Vagina (tissue), 2 donors: ENCODE measurements at regions of chr14 and their contacts with region 1.

Region 1: DNA sequence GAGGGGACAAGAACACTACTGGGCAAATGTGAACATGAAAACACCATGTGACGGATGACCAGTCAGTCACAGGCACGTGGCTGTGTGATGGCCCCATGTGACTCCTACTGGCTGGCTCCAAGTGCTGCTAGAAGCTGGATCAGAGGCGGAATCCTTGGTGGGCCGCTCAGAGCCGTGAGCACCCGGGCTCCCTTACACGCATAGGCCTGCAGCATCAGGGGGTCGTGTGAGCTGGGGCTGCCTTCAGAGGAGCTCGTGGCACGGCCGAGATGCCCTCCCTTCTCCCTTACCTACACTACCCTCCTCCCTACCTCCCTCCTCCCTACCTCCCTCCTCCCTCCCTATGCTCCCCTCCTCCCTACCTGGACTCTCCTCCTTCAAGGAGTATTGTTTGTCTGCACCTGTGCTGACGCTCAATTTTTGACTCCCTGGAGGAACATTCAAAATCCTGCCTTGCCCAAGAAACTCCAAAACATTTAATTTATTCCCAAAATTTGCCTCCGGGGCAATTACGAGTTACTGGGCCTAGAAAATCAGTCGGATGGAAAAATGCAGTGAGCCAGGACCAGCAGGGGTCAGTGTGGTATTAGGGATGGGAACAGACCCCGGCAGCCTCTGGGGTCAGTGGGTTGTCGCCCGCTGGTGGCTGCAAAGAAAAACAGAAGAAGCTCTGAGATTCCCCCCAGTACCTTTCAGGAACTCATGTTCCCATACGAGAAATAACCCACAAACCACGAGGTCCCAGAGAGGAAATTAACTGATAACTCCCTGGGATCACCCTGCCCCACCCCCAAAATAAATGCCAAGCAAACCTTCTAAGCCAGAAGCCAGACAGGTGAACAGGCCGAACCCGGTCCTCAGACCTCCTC is 61.2 kb downstream of the C14orf132 start:
- DNase-seq: no peak
- H3K4me3 ChIP-seq: no peak overlapping the region
- H3K27ac ChIP-seq: peak overlapping the region; percentile 42
- H3K4me1 ChIP-seq: peaks cover 36% of the 10 kb centered on the region
- H3K27me3 ChIP-seq: no peaks in the 10 kb centered on the region
- CTCF ChIP-seq: peak; percentile 79 to 88 (median 86)
- POLR2A ChIP-seq: no peak

Region 2: GRCh38 chr14:95993768-95994592 is 106.4 kb before region 1 on chr14:
- intact Hi-C with region 1: loop called (anchors 10 kb)
- DNase-seq: no peak
- H3K4me3 ChIP-seq: no peak overlapping the region
- H3K27ac ChIP-seq: no peak overlapping the region
- H3K4me1 ChIP-seq: no peaks in the 10 kb centered on the region
- H3K27me3 ChIP-seq: no peaks in the 10 kb centered on the region
- CTCF ChIP-seq: peak; percentile 34 to 76 (median 51)
- POLR2A ChIP-seq: no peak

Region 3: DNA sequence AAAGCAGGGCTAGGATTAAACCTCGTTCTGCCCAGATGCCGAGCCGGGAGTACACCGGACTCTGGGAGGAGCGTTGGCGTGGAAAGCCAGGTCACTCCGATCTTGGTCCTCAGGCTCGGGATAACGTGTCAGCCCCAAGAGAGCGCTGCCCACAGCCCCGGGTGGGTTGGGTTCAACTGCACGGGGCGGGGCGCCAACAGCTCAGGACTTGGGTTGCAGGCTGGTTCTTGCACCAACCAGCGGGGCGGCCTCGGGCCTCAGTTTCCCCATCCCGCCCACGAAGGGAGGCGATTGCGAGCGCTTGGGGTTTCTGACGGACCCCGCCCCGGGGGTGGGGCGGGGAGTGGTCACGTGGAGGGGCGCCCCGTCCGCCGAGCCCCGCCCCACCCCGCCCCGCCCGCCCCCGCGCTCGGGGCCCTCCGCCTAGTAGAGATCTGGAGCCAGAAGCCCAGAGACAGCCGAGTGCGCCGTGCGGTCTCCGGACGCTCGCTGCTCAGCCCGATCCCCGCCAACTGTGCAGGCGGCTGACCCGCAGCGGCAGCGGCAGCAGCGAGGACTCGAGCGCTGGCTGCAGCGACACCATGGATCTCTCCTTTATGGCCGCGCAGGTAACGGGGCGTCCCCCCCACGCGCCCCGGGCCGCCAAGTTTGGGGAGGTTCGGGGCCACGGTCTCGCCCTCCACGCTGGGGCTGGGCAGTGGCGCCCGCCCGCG is 61.3 kb before region 1 on chr14 and contains the start of gene C14orf132:
- intact Hi-C with region 1: loop called (anchors 2 kb)
- DNase-seq: peak in 1 of 2 donors; percentile 90
- H3K4me3 ChIP-seq: peak within 1 kb of the TSS; percentile 81 to 84
- H3K27ac ChIP-seq: peak within 1 kb of the TSS; percentile 91
- H3K4me1 ChIP-seq: peaks cover 44% of the 10 kb centered on the region
- H3K27me3 ChIP-seq: no peaks in the 10 kb centered on the region
- CTCF ChIP-seq: no peak
- POLR2A ChIP-seq: peak in 1 of 2 donors; percentile 68
- total RNA-seq, gene C14orf132: 12.0 TPM

Region 4: DNA sequence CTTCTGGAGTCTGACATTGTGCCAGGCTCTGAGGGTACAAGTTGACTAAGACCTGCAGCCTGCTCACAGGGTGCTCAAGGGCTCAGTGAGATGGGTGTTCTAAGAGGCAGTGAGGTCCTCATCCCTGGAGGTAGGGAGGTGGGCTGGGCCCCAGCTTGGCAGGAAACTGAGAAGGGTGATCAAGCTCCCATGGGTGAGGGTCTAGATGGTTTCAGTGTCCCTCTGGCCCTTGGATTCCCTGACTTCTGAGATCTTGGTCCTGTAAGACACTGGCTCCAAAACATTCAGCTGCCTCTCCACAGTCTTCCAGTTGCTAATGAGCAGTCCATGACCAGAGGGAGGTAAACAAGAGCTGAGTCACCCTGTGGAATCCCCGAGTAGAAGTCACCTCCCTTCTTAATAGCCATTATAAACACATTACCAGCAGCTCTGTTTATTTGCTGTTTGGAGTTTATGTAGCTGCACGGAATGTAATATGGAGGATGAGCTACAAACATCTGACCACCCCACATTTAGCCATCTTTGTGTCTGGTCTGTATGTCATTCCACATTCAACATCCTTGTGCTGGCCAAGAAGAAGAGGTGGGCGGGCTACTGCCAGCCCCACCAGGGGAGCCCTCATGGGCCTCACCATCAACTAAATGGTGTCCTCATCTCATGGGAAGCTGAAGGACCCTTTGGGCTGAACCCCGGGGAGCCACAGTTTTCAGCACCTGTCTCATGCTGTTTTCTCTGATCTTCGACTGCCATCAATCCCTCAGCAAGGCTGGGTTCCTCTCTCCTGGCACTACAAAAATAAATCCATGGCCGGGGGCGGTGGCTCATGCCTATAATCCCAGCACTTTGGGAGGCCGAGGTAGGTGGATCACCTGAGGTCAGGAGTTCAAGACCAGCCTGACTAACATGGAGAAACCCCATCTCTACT is 67.1 kb after region 1 on chr14:
- intact Hi-C with region 1: no loop called
- DNase-seq: peak; percentile 55 to 84
- H3K4me3 ChIP-seq: no peak overlapping the region
- H3K27ac ChIP-seq: peak overlapping the region; percentile 82
- H3K4me1 ChIP-seq: peaks cover 23% of the 10 kb centered on the region
- H3K27me3 ChIP-seq: no peaks in the 10 kb centered on the region
- CTCF ChIP-seq: no peak
- POLR2A ChIP-seq: no peak

Region 5: GRCh38 chr14:96275177-96276112 is 175.1 kb after region 1 on chr14:
- intact Hi-C with region 1: loop called (anchors 2 kb)
- DNase-seq: peak in 1 of 2 donors; percentile 87
- H3K4me3 ChIP-seq: no peak overlapping the region
- H3K27ac ChIP-seq: peak overlapping the region; percentile 68
- H3K4me1 ChIP-seq: peaks cover 42% of the 10 kb centered on the region
- H3K27me3 ChIP-seq: no peaks in the 10 kb centered on the region
- CTCF ChIP-seq: peak; percentile 88 to 98 (median 92)
- POLR2A ChIP-seq: no peak